Dendritic cell treated with granulocyte-macrophage colony-stimulating factor and Interleukin-4, amounts not matched to agents 40 ng/mL and 50 ng/mL, for 4 days (primary cell): ENCODE measurements at regions of chr2 and their contacts with region 1.

Region 1: GRCh38 chr2:201451292-201452057 is at the starts of genes STRADB and TRAK2:
- H3K4me3 Mint-ChIP-seq: peak within 1 kb of the TSS; percentile 97
- H3K27ac Mint-ChIP-seq: peak within 1 kb of the TSS; percentile 98
- H3K4me1 Mint-ChIP-seq: peaks cover 36% of the 10 kb centered on the region
- H3K27me3 Mint-ChIP-seq: no peaks in the 10 kb centered on the region

Region 2: GRCh38 chr2:201257956-201258665 is 193.4 kb before region 1 on chr2:
- intact Hi-C with region 1: loop called (anchors 5 kb)
- H3K4me3 Mint-ChIP-seq: peak overlapping the region; percentile 100
- H3K27ac Mint-ChIP-seq: peak overlapping the region; percentile 96
- H3K4me1 Mint-ChIP-seq: peaks cover 58% of the 10 kb centered on the region
- H3K27me3 Mint-ChIP-seq: no peaks in the 10 kb centered on the region

Region 3: GRCh38 chr2:201406077-201406662 is 45.3 kb before region 1 on chr2:
- intact Hi-C with region 1: loop called (anchors 2 kb)
- H3K4me3 Mint-ChIP-seq: peak overlapping the region; percentile 64
- H3K27ac Mint-ChIP-seq: peak overlapping the region; percentile 90
- H3K4me1 Mint-ChIP-seq: peaks cover 27% of the 10 kb centered on the region
- H3K27me3 Mint-ChIP-seq: no peaks in the 10 kb centered on the region

Region 4: DNA sequence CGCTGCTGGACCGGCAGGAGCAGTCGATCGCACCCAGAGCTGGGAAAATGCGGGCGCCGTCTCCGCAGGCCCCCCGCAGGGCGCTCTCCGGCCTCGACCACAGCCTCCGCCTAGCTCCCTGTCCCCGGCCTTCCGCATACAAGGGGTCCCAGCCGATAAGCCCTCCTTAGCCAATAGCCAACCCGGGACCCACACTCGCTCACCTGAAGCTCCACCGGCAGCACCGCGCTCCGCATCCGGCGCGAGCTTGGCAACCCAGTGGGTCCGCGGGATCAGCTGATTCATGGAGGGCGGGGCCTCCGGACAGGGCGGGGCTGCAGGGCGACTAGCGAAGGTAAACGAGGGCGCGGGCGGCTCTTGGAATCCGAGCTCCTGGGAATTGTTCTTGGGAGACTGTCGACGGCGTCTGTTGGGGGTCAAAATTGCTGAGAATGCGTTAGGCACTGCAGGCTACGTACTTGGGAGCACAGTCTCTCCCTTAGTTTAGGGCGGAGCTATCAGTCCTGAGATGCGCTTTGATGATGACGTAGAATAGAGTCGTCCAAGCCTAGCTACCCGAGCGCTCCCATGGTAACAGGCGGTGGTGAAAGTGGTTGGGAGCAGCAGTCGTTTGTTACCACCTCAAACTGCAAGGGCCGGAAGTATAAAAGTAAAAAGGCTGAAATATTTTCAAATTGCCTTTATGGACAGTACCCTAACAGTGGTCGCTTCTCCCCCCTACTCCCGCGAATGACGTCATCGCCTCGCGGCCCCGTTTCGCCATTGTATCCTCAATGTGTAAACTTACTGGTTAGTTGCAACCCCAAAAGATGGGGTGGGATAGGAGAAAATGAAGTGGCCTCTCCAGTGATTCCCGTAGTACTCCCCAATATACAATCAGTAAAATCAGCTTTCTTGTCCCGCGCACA is 329.5 kb after region 1 on chr2 and contains the start of gene ALS2:
- intact Hi-C with region 1: loop called (anchors 10 kb)
- H3K4me3 Mint-ChIP-seq: peak within 1 kb of the TSS; percentile 97
- H3K27ac Mint-ChIP-seq: peak within 1 kb of the TSS; percentile 90
- H3K4me1 Mint-ChIP-seq: peaks cover 21% of the 10 kb centered on the region
- H3K27me3 Mint-ChIP-seq: peaks cover 9% of the 10 kb centered on the region